ENCODE measurements at regions of chr3 and their contacts with region 1.

Region 1: DNA sequence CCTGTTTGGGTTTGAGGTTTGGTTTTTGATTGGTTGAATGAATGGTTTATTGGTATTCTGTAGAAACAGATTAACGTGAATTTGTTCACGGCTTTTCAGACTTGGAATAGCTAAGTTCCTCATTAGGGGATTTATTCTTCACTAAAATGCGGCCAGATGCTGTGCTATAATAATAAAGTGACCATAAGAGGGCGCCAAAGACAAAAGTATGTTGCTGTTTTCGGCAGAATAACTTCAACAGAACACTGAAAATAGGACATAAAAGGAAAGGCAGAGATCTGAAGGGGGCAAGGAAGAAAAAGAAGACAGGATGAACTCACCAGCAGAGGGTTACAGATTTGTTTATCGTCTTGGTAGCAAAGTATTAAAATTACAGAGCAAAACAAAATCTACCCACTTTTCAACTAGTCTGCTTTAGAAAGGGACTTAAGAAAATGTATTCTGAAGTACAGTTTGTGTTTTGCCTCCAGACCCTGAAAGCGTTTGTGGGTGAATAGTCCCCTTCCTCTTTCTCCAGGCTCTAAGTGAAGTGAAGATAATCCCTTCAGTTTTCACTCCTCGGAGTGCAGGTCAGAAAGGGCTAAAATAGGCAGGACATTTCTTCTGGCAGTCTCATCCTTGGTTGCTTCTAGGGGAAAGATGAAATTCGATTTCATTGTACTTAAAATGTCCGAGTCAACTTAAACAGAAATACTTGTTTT is 147.6 kb downstream of the IL20RB start:
- DNase-seq: peak; percentile 29 to 43
- ATAC-seq: peak; percentile 72 to 88; a peak in 4 of 6 replicates
- H3K4me3 ChIP-seq: no peak overlapping the region
- H3K27ac ChIP-seq: no peak overlapping the region
- H3K4me1 ChIP-seq: no peaks in the 10 kb centered on the region
- CTCF ChIP-seq: peak; percentile 70
- EP300 ChIP-seq: no peak
- POLR2A ChIP-seq: no peak
- RAD21 ChIP-seq: peak; percentile 67 to 72

Region 2: GRCh38 chr3:137970914-137971831 is 865.7 kb after region 1 on chr3:
- CTCF ChIA-PET with region 1: interaction called, 16 read pairs
- POLR2A ChIA-PET with region 1: no interaction called
- DNase-seq: peak; percentile 50 to 67
- ATAC-seq: peak; percentile 100
- H3K4me3 ChIP-seq: no peak overlapping the region
- H3K27ac ChIP-seq: no peak overlapping the region
- H3K4me1 ChIP-seq: no peaks in the 10 kb centered on the region
- CTCF ChIP-seq: peak; percentile 64
- EP300 ChIP-seq: no peak
- POLR2A ChIP-seq: no peak
- RAD21 ChIP-seq: peak; percentile 69 to 76

Region 3: DNA sequence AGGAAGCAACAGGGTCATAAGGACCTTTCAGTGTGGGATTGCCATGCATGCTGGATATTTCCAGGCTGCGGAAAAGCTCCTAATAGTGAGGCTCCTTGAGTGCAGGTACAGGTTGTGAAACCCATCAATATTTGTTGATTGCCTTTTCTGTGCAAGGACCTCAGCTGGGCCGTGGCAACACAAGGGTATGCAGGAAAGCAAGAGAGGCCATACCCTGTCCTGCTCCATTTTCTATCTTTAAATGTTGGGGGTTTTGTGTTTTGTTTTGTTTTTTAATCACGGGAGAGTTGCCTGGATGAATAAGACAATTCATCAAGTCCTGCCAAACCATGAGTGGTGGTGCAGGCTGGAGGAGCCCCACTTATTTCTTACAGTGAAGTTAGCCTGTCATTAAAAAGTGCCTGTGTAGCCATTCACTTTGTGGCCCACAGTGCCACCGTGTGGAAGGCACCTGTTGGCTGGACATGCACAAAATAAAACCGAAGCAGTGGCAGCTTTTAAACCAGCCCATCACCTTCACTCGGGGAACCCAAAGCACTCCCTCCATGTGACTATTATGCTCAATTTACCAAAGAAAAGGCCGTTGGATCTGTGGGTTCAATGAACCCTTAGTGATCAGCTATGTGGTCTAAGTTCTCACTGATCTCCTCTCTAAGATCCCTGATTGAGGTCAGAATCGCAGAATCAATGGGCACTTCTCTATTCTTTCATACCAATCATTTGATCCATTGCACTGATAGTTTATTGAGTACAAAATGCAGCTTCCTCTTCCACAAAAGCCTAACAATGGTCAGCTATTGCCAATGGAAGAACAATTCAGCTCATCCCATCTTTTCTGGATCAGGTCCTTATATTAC is 946.7 kb after region 1 on chr3:
- CTCF ChIA-PET with region 1: interaction called, 19 read pairs
- POLR2A ChIA-PET with region 1: no interaction called
- DNase-seq: peak; percentile 7 to 45
- ATAC-seq: peak; percentile 94 to 95
- H3K4me3 ChIP-seq: no peak overlapping the region
- H3K27ac ChIP-seq: no peak overlapping the region
- H3K4me1 ChIP-seq: no peaks in the 10 kb centered on the region
- CTCF ChIP-seq: peak; percentile 56
- EP300 ChIP-seq: no peak
- POLR2A ChIP-seq: no peak
- RAD21 ChIP-seq: peak; percentile 49 to 65

Measured in A549 (cell line).